Common myeloid progenitor, CD34-positive (primary cell): ENCODE measurements at regions of chr17 and their contacts with region 1.

Region 1: DNA sequence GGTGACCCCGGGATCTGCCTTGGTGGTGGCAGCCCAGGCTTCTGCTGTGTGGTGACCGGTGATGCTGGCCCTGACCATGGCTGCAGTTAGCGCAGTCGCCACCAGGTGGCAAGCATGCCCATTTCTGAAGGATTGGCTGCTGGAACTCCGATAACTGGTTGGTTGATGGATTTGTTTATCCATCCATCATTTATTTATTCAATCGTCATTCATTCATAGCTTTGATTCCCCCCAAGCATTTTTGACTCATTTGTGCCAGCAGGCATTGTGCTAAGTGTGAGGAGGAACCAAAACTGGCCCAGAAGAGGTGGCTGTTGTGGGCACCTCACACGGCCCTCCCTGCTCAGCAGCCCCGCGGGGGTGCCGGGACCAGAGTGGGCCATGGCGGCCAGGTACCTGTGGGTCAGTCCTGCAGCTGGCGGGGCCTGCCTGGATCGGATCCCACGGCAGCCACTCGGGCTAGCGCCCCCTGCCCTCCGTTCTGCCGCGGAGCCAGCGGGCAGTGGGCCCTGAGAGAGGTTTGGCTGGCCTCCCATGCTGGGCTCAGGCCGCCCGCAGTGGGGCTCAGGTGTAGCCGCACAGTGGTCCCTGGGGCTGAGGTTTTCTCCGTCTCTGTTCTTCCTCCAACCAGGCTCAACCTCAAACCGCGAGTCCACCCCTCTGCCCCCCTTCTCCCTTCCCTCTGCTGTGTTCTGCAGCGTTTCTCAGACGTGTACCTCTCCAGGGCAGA is 28.8 kb upstream of the ITGA3 start:
- DNase-seq: peak; percentile 67 to 85 (median 68)
- H3K4me3 ChIP-seq: peak overlapping the region in 5 of 7 experiments; percentile 17 to 65 (median 26)
- H3K27ac ChIP-seq: no peak overlapping the region
- H3K4me1 ChIP-seq: peaks cover 0 to 29% (median 20%) of the 10 kb centered on the region in 4 experiments
- H3K27me3 ChIP-seq: peaks cover 0 to 2% (median 0%) of the 10 kb centered on the region in 5 experiments

Region 2: DNA sequence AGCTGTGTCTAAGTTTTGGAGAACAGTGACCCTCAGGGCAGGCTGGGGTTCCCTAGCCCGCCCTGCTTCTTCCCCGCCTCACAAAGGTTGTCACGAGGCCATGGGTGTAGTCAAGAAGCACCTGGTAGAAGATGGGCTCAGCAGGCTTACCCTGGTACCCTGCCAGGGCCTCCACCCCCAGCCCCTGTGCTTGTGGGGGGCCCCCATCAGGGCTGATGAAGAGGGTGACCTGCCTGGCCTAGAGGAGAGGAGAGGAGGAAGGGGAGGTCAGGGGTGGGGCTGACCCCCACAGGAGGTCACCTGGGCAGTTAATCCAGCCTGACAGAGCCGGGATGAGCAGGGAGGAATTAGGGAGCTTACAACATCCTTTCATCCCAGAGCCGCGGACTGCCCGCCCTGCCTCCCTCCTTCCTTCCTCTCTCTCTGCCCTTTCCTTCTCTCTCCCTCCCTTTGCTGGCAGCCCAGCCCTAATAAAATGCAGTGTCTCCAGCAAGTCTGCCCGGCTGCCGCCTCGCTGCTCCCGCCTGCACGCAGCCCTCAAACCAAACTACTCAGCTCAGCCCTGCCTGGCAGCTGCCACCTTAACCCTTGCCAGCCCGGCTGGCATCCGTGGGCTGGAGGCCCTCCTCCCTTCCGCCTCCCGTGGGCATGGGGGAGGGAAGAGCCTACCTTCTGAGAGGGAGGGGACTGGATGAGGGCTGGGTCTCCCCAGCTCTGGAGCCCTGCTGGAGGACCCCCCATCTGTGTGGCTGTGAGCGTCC is 39.2 kb before region 1 on chr17:
- CTCF ChIA-PET with region 1: no interaction called
- POLR2A ChIA-PET with region 1: no interaction called
- DNase-seq: peak in 1 of 3 donors; percentile 52
- H3K4me3 ChIP-seq: no peak overlapping the region
- H3K27ac ChIP-seq: no peak overlapping the region
- H3K4me1 ChIP-seq: peaks cover 0 to 21% (median 13%) of the 10 kb centered on the region in 4 experiments
- H3K27me3 ChIP-seq: peaks cover 0 to 79% (median 28%) of the 10 kb centered on the region in 5 experiments

Region 3: GRCh38 chr17:50055426-50056230 is 28.6 kb after region 1 on chr17 and contains the start of gene ITGA3:
- CTCF ChIA-PET with region 1: interaction called, 27 read pairs
- POLR2A ChIA-PET with region 1: interaction called, 6 read pairs
- DNase-seq: peak; percentile 26 to 44 (median 35)
- H3K4me3 ChIP-seq: peak within 1 kb of the TSS; percentile 39 to 78 (median 61)
- H3K27ac ChIP-seq: no peak within 1 kb of the TSS
- H3K4me1 ChIP-seq: peaks cover 0 to 52% (median 32%) of the 10 kb centered on the region in 4 experiments
- H3K27me3 ChIP-seq: peaks cover 0 to 45% (median 25%) of the 10 kb centered on the region in 5 experiments

Region 4: DNA sequence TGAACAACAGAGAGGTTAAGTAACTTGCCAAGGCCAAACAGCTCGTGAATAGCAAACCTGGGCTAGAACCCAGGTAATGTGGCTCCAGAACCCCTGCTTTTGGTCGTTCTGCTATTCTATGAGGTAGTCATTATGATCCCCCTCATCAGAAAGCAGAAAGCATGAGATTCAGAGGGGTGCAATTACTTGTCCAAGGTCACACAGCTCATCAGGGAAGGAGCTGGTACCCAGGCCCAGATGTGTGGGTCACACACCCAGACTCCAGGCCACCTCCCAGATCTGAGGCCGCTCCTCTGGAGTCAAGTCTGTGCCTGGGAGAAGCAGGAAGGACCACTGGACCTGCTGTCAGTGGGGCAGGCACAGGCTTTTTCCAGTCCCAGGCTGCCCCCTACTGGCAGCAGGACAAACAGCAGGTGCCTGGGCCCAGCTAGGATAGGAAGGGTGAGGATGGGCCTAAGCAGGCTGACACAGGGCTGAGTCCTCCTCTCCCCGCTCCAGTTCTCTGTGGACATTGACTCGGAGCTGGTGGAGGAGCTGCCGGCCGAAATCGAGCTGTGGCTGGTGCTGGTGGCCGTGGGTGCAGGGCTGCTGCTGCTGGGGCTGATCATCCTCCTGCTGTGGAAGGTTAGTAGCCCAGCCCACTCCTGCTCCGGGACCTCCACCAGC is 60.3 kb after region 1 on chr17:
- CTCF ChIA-PET with region 1: interaction called, 30 read pairs
- POLR2A ChIA-PET with region 1: no interaction called
- DNase-seq: peak; percentile 51 to 73 (median 72)
- H3K4me3 ChIP-seq: no peak overlapping the region
- H3K27ac ChIP-seq: no peak overlapping the region
- H3K4me1 ChIP-seq: no peaks in the 10 kb centered on the region
- H3K27me3 ChIP-seq: no peaks in the 10 kb centered on the region

Region 5: GRCh38 chr17:50094753-50095619 is 67.9 kb after region 1 on chr17 and contains the start of gene PDK2:
- CTCF ChIA-PET with region 1: interaction called, 17 read pairs
- POLR2A ChIA-PET with region 1: interaction called, 4 read pairs
- DNase-seq: peak; percentile 97 to 99 (median 98)
- H3K4me3 ChIP-seq: peak within 1 kb of the TSS; percentile 77 to 97 (median 84)
- H3K27ac ChIP-seq: peak within 1 kb of the TSS; percentile 61 to 85
- H3K4me1 ChIP-seq: peaks cover 0 to 24% (median 19%) of the 10 kb centered on the region in 4 experiments
- H3K27me3 ChIP-seq: no peaks in the 10 kb centered on the region

Region 6: GRCh38 chr17:50147841-50148225 is 120.8 kb after region 1 on chr17:
- CTCF ChIA-PET with region 1: no interaction called
- POLR2A ChIA-PET with region 1: no interaction called
- DNase-seq: no peak
- H3K4me3 ChIP-seq: peak overlapping the region in 6 of 7 experiments; percentile 67 to 88 (median 84)
- H3K27ac ChIP-seq: peak overlapping the region in 1 of 2 experiments; percentile 66
- H3K4me1 ChIP-seq: peaks cover 4 to 74% (median 70%) of the 10 kb centered on the region in 4 experiments
- H3K27me3 ChIP-seq: no peaks in the 10 kb centered on the region